Body of pancreas (tissue), 4 donors: ENCODE measurements at regions of chr11 and their contacts with region 1.

Region 1: GRCh38 chr11:110195845-110196754 is 100.3 kb downstream of the RDX start:
- DNase-seq: no peak
- ATAC-seq: no peak
- H3K4me3 ChIP-seq: no peak overlapping the region
- H3K27ac ChIP-seq: no peak overlapping the region
- H3K4me1 ChIP-seq: no peaks in the 10 kb centered on the region
- H3K27me3 ChIP-seq: no peaks in the 10 kb centered on the region
- CTCF ChIP-seq: no peak
- POLR2A ChIP-seq: no peak

Region 2: GRCh38 chr11:110373051-110373702 is 177.1 kb after region 1 on chr11:
- intact Hi-C with region 1: loop called (anchors 5 kb)
- DNase-seq: no peak
- ATAC-seq: no peak
- H3K4me3 ChIP-seq: no peak overlapping the region
- H3K27ac ChIP-seq: no peak overlapping the region
- H3K4me1 ChIP-seq: peaks cover 13% of the 10 kb centered on the region
- H3K27me3 ChIP-seq: no peaks in the 10 kb centered on the region
- CTCF ChIP-seq: no peak
- POLR2A ChIP-seq: no peak